AG04450 (cell line): ENCODE measurements at regions of chr13 and their contacts with region 1.

Region 1: GRCh38 chr13:110283736-110284517 is 23.0 kb downstream of the COL4A1 start:
- DNase-seq: no peak
- H3K4me3 ChIP-seq: no peak overlapping the region
- H3K27ac ChIP-seq: no peak overlapping the region
- H3K27me3 ChIP-seq: no peaks in the 10 kb centered on the region
- CTCF ChIP-seq: no peak

Region 2: GRCh38 chr13:110298505-110299282 is 14.8 kb after region 1 on chr13:
- CTCF ChIA-PET with region 1: interaction called, 3 read pairs
- POLR2A ChIA-PET with region 1: interaction called, 10 read pairs
- DNase-seq: no peak
- H3K4me3 ChIP-seq: no peak overlapping the region
- H3K27ac ChIP-seq: no peak overlapping the region
- H3K27me3 ChIP-seq: no peaks in the 10 kb centered on the region
- CTCF ChIP-seq: no peak